A549 (cell line): ENCODE measurements at regions of chr19 and their contacts with region 1.

Region 1: DNA sequence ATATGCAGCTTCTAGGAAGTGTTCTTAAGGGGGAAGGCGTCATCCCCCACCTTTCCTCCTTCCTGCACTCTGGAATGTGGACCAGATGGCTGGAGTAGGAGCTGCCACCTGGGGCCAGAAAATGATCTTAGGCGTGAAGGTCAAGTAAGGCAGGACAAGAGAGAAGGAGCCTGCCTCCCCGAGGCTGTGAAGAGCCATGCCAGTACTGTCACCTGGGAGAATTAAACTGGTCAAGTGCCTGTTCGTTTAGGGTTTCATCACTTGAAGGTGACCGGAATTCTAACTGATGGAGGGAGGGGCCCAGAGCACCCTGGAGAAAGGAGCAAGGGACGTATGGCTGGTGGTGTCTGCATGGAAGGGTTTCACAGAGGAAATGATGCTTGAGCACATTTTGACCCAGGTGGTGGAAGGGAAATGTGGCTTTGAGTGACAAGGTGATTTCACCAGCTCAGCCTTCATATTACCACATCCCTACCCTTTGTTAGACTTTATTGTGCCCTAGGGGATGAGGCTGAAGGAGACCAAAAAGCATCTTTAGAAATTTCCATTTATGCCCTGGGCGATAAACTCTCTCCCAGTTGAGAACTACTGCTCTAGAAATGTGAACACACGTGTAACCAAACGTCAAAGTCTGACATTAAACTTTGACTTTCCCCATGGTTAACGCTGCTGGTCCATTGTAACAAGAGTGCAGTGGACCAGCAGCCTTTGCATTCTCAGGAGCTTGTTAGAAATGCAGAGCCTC is 37.5 kb downstream of the PPP2R1A start:
- DNase-seq: no peak
- ATAC-seq: no peak
- H3K4me3 ChIP-seq: no peak overlapping the region
- H3K27ac ChIP-seq: no peak overlapping the region
- H3K4me1 ChIP-seq: no peaks in the 10 kb centered on the region
- CTCF ChIP-seq: no peak
- EP300 ChIP-seq: no peak
- POLR2A ChIP-seq: no peak
- RAD21 ChIP-seq: no peak

Region 2: GRCh38 chr19:52211926-52212571 is 15.3 kb before region 1 on chr19:
- CTCF ChIA-PET with region 1: no interaction called
- POLR2A ChIA-PET with region 1: no interaction called
- DNase-seq: no peak
- ATAC-seq: no peak
- H3K4me3 ChIP-seq: no peak overlapping the region
- H3K27ac ChIP-seq: no peak overlapping the region
- H3K4me1 ChIP-seq: no peaks in the 10 kb centered on the region
- CTCF ChIP-seq: no peak
- EP300 ChIP-seq: no peak
- POLR2A ChIP-seq: no peak
- RAD21 ChIP-seq: no peak

Region 3: GRCh38 chr19:52237771-52238400 is 10.5 kb after region 1 on chr19:
- CTCF ChIA-PET with region 1: interaction called, 16 read pairs
- POLR2A ChIA-PET with region 1: no interaction called
- DNase-seq: peak in 1 of 2 experiments; percentile 69
- ATAC-seq: peak; percentile 57 to 77; a peak in 4 of 6 replicates
- H3K4me3 ChIP-seq: no peak overlapping the region
- H3K27ac ChIP-seq: no peak overlapping the region
- H3K4me1 ChIP-seq: no peaks in the 10 kb centered on the region
- CTCF ChIP-seq: peak; percentile 68
- EP300 ChIP-seq: no peak
- POLR2A ChIP-seq: no peak
- RAD21 ChIP-seq: peak; percentile 71 to 83